Activated naive CD4-positive, alpha-beta T cell treated with anti-CD3 and anti-CD28 coated beads for 36 hours (primary cell): ENCODE measurements at regions of chr11 and their contacts with region 1.

Region 1: GRCh38 chr11:77473801-77474683 is at the start of gene PAK1:
- DNase-seq: peak; percentile 92
- H3K4me3 Mint-ChIP-seq: peak within 1 kb of the TSS; percentile 80
- H3K27ac Mint-ChIP-seq: peak within 1 kb of the TSS; percentile 74
- H3K4me1 Mint-ChIP-seq: peaks cover 13% of the 10 kb centered on the region
- H3K27me3 Mint-ChIP-seq: peaks cover 9% of the 10 kb centered on the region
- total RNA-seq, gene PAK1: 45.8 to 49.5 TPM

Region 2: GRCh38 chr11:77497368-77497767 is 23.3 kb after region 1 on chr11:
- CTCF ChIA-PET with region 1: no interaction called
- intact Hi-C with region 1: loop called (anchors 1 kb)
- DNase-seq: peak; percentile 16
- H3K4me3 Mint-ChIP-seq: no peak overlapping the region
- H3K27ac Mint-ChIP-seq: peak overlapping the region; percentile 57
- H3K4me1 Mint-ChIP-seq: peaks cover 9% of the 10 kb centered on the region
- H3K27me3 Mint-ChIP-seq: peaks cover 8% of the 10 kb centered on the region

Region 3: GRCh38 chr11:77547863-77548551 is 74.0 kb after region 1 on chr11:
- CTCF ChIA-PET with region 1: interaction called, 9 read pairs
- intact Hi-C with region 1: loop called (anchors 1 kb)
- DNase-seq: peak; percentile 55
- H3K4me3 Mint-ChIP-seq: no peak overlapping the region
- H3K27ac Mint-ChIP-seq: no peak overlapping the region
- H3K4me1 Mint-ChIP-seq: peaks cover 2% of the 10 kb centered on the region
- H3K27me3 Mint-ChIP-seq: no peaks in the 10 kb centered on the region